Activated CD4-positive, alpha-beta T cell treated with anti-CD3 and anti-CD28 coated beads for 36 hours (primary cell): ENCODE measurements at regions of chr14 and their contacts with region 1.

Region 1: DNA sequence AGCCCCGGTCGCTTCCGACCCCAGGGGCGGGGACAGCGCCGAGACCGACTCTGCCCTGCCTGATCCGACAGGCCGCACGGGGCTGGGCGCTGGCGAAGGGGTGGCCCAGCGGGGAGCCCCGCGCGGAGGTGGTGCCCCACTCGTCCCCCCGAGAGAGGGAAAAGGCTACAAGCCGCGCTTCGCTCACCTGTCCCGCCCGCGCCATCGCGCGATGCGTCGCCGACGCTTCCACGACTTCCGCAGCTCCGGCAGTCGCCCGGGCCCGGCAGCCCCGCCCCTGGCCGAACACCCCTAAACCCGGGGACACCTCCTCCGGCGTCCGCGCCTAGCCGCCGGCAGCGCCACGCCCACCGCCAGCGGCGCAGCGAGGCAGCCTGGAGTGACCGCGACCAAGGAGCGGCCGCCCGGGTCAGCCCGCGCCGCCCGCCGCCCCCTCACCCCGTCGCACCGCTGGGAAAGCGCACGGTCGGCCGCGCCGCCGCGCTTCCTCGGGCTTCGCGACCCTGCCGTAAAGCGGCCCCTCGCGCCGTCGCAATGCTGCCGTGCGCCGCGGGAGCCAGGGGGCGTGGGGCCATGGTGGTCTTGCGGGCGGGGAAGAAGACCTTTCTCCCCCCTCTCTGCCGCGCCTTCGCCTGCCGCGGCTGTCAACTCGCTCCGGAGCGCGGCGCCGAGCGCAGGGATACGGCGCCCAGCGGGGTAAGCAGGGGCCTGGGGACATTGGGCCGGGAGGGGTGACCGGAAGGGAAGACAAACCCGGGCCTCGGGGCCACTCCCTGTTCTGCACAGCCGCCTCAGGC is at the starts of genes BAG5 and COA8:
- DNase-seq: peak; percentile 93
- ATAC-seq: peak; percentile 78
- H3K4me3 Mint-ChIP-seq: peak within 1 kb of the TSS; percentile 94
- H3K27ac Mint-ChIP-seq: peak within 1 kb of the TSS; percentile 91
- H3K4me1 Mint-ChIP-seq: peaks cover 61% of the 10 kb centered on the region
- H3K27me3 Mint-ChIP-seq: no peaks in the 10 kb centered on the region
- total RNA-seq, gene BAG5: 24.2 to 25.1 TPM
- total RNA-seq, gene COA8: 39.6 to 41.7 TPM

Region 2: GRCh38 chr14:102969060-102969791 is 593.4 kb before region 1 on chr14:
- CTCF ChIA-PET with region 1: no interaction called
- POLR2A ChIA-PET with region 1: no interaction called
- intact Hi-C with region 1: no loop called
- DNase-seq: no peak
- ATAC-seq: no peak
- H3K4me3 Mint-ChIP-seq: no peak overlapping the region
- H3K27ac Mint-ChIP-seq: no peak overlapping the region
- H3K4me1 Mint-ChIP-seq: no peaks in the 10 kb centered on the region
- H3K27me3 Mint-ChIP-seq: no peaks in the 10 kb centered on the region

Region 3: GRCh38 chr14:103385152-103385993 is 177.3 kb before region 1 on chr14 and contains the start of gene MARK3:
- CTCF ChIA-PET with region 1: interaction called, 3 read pairs
- POLR2A ChIA-PET with region 1: no interaction called
- intact Hi-C with region 1: loop called in 1 of 2 experiments (anchors 1 kb)
- DNase-seq: peak; percentile 98
- ATAC-seq: peak; percentile 93
- H3K4me3 Mint-ChIP-seq: peak within 1 kb of the TSS; percentile 99
- H3K27ac Mint-ChIP-seq: peak within 1 kb of the TSS; percentile 98
- H3K4me1 Mint-ChIP-seq: peaks cover 33% of the 10 kb centered on the region
- H3K27me3 Mint-ChIP-seq: no peaks in the 10 kb centered on the region
- total RNA-seq, gene MARK3: 57.3 to 64.9 TPM

Region 4: GRCh38 chr14:103520657-103521437 is 41.8 kb before region 1 on chr14:
- CTCF ChIA-PET with region 1: interaction called, 10 read pairs
- POLR2A ChIA-PET with region 1: interaction called, 5 read pairs
- intact Hi-C with region 1: no loop called
- DNase-seq: peak; percentile 74
- ATAC-seq: peak; percentile 45
- H3K4me3 Mint-ChIP-seq: peak overlapping the region; percentile 39
- H3K27ac Mint-ChIP-seq: no peak overlapping the region
- H3K4me1 Mint-ChIP-seq: peaks cover 10% of the 10 kb centered on the region
- H3K27me3 Mint-ChIP-seq: peaks cover 12% of the 10 kb centered on the region

Region 5: GRCh38 chr14:103528587-103529382 is 33.8 kb before region 1 on chr14 and contains the start of gene TRMT61A:
- CTCF ChIA-PET with region 1: interaction called, 9 read pairs
- POLR2A ChIA-PET with region 1: interaction called, 3 read pairs
- intact Hi-C with region 1: loop called (anchors 1 to 2 kb)
- DNase-seq: peak; percentile 87
- ATAC-seq: peak; percentile 77
- H3K4me3 Mint-ChIP-seq: peak within 1 kb of the TSS; percentile 96
- H3K27ac Mint-ChIP-seq: peak within 1 kb of the TSS; percentile 94
- H3K4me1 Mint-ChIP-seq: peaks cover 33% of the 10 kb centered on the region
- H3K27me3 Mint-ChIP-seq: peaks cover 2% of the 10 kb centered on the region
- total RNA-seq, gene TRMT61A: 8.8 to 9.0 TPM

Region 6: GRCh38 chr14:103613517-103613916 is 50.9 kb after region 1 on chr14:
- CTCF ChIA-PET with region 1: no interaction called
- POLR2A ChIA-PET with region 1: no interaction called
- intact Hi-C with region 1: no loop called
- DNase-seq: peak; percentile 44
- ATAC-seq: no peak
- H3K4me3 Mint-ChIP-seq: no peak overlapping the region
- H3K27ac Mint-ChIP-seq: no peak overlapping the region
- H3K4me1 Mint-ChIP-seq: peaks cover under 1% of the 10 kb centered on the region
- H3K27me3 Mint-ChIP-seq: peaks cover 2% of the 10 kb centered on the region

Region 7: DNA sequence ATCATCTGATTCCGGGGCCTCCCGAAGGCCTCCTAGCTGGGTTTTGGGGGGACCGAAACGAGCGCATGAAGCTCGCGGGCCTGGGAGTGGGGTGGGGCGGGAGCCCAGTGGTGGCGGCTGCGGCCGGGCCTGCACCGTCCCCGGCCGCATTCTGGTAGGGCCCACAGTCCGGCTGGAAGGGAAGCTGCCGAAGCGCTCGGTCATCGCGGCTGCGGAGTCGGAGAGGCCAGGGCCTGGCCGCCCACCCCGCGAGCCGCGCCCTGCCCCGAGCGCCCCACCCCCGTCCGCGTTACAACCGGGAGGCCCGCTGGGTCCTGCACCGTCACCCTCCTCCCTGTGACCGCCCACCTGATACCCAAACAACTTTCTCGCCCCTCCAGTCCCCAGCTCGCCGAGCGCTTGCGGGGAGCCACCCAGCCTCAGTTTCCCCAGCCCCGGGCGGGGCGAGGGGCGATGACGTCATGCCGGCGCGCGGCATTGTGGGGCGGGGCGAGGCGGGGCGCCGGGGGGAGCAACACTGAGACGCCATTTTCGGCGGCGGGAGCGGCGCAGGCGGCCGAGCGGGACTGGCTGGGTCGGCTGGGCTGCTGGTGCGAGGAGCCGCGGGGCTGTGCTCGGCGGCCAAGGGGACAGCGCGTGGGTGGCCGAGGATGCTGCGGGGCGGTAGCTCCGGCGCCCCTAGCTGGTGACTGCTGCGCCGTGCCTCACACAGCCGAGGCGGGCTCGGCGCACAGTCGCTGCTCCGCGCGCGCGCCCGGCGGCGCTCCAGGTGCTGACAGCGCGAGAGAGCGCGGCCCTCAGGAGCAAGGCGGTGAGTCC is 66.3 kb after region 1 on chr14 and contains the start of gene KLC1:
- CTCF ChIA-PET with region 1: no interaction called
- POLR2A ChIA-PET with region 1: no interaction called
- intact Hi-C with region 1: loop called (anchors 1 kb)
- DNase-seq: peak; percentile 92
- ATAC-seq: peak; percentile 77
- H3K4me3 Mint-ChIP-seq: peak within 1 kb of the TSS; percentile 87
- H3K27ac Mint-ChIP-seq: peak within 1 kb of the TSS; percentile 81
- H3K4me1 Mint-ChIP-seq: peaks cover 35% of the 10 kb centered on the region
- H3K27me3 Mint-ChIP-seq: no peaks in the 10 kb centered on the region
- total RNA-seq, gene KLC1: 97.4 to 113 TPM

Region 8: DNA sequence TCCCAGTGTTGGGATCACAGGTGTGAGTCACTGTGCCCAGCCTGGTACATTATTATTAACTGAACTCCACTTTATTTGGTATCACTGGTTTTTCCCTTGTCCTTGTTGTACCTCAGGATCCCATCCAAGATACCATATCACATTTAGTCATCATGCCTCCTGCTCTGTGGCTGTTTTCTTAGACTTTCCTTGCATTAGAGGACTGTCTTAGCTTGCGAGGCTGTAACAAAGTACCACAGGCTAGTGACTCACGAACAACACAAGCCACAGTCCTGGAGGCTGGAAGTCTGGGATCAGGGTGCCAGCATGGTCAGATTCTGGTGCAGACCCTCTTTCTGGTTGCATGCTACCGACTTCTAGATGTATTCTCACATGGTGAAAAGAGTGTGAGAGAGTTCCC is 78.6 kb after region 1 on chr14:
- CTCF ChIA-PET with region 1: no interaction called
- POLR2A ChIA-PET with region 1: no interaction called
- intact Hi-C with region 1: no loop called
- DNase-seq: no peak
- ATAC-seq: no peak
- H3K4me3 Mint-ChIP-seq: no peak overlapping the region
- H3K27ac Mint-ChIP-seq: no peak overlapping the region
- H3K4me1 Mint-ChIP-seq: peaks cover 30% of the 10 kb centered on the region
- H3K27me3 Mint-ChIP-seq: no peaks in the 10 kb centered on the region

Region 9: GRCh38 chr14:103699901-103700752 is 137.5 kb after region 1 on chr14:
- CTCF ChIA-PET with region 1: no interaction called
- POLR2A ChIA-PET with region 1: no interaction called
- intact Hi-C with region 1: no loop called
- DNase-seq: no peak
- ATAC-seq: no peak
- H3K4me3 Mint-ChIP-seq: no peak overlapping the region
- H3K27ac Mint-ChIP-seq: no peak overlapping the region
- H3K4me1 Mint-ChIP-seq: no peaks in the 10 kb centered on the region
- H3K27me3 Mint-ChIP-seq: no peaks in the 10 kb centered on the region

Region 10: DNA sequence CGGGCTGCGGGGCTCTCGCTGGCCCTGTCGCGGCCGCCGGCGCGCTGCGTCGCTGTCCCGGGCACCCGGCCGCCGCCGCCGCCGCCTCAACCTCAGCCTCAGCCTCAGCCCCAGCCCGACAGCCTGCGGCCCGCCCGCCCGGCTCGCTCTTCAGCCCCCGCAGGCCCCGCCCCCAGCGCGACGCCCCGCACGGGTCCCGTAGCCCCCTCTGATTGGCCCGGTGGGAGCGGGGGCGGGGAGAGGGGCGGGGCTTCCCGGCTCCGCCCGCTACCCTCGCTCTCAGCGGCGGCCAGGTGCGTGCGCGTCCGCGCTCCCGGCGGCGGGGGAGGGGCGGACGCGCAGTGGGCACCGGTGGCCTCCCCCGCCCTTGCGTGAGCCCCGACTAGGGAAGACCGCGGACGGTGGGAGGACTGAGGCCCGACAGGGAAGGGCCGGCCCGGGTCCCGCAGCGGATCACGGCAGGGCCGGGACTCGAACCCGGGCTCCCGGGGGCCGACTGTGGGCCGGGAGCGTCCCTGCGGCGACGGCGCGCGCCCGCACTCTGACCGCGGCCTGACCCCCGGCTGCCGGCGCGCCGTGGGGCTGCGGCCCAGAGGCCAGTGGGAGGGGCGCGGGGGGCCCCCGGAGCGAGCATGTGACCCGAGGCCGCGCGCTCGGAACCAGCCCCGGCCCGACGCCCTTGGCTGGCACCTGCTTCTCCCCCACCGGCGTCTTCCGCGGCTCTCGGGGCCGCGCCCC is 285.0 kb after region 1 on chr14 and contains the start of gene PPP1R13B:
- CTCF ChIA-PET with region 1: no interaction called
- POLR2A ChIA-PET with region 1: no interaction called
- intact Hi-C with region 1: loop called in 1 of 2 experiments (anchors 1 kb)
- DNase-seq: peak; percentile 97
- ATAC-seq: peak; percentile 98
- H3K4me3 Mint-ChIP-seq: peak within 1 kb of the TSS; percentile 76
- H3K27ac Mint-ChIP-seq: peak within 1 kb of the TSS; percentile 38
- H3K4me1 Mint-ChIP-seq: peaks cover 16% of the 10 kb centered on the region
- H3K27me3 Mint-ChIP-seq: peaks cover 5% of the 10 kb centered on the region
- total RNA-seq, gene PPP1R13B: 9.3 to 10.3 TPM